Activated CD8-positive, alpha-beta memory T cell treated with anti-CD3 and anti-CD28 coated beads, Interleukin-2, amount 10 ng/mL, durations not matched to agents 7 days and 5 days (primary cell): ENCODE measurements at regions of chr7 and their contacts with region 1.

Region 1: GRCh38 chr7:150898475-150899011 is 46.2 kb downstream of the AOC1 start:
- DNase-seq: peak; percentile 81
- ATAC-seq: peak; percentile 86
- H3K4me3 Mint-ChIP-seq: no peak overlapping the region
- H3K27ac Mint-ChIP-seq: no peak overlapping the region
- H3K4me1 Mint-ChIP-seq: peaks cover 12% of the 10 kb centered on the region
- H3K27me3 Mint-ChIP-seq: peaks cover 74% of the 10 kb centered on the region

Region 2: DNA sequence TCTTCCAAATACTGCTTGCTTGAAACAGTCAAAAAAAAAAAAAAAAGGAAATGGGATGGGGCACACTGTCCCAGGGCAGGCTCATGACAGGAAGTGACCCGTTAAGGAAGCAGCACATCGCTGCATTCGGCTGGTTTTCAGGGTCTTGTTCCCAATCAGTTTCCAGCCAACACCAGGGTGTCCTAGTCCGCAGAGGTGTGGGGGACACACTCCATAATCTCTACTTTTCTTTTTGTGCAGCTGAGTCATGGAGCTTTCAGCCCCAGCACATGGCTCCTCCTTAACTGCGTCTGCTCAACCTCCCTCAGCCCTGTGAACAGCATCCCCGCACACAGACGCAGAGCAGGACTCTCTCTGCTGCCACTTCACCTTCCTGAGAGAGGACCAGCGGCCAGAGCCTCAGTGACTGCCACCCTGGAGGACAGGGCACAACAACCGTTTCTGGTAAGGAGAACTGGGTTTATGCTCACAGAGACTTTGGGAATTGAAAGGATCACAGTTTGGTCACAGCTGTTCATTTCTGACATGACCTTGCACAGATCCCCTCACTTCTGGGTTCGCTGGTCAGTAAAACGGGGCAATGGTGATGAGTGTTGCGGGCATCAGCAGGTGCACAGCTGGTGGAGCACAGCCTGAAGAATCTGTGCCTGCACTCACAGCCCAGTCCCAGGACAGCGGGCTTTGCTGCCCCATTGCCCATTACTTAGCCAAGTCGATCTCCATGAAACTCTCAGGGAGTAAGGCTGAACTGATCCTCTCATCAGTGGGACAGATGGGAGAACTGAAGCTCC is 161.1 kb before region 1 on chr7 and contains the start of gene GIMAP5:
- CTCF ChIA-PET with region 1: no interaction called
- DNase-seq: peak; percentile 79
- ATAC-seq: peak; percentile 65
- H3K4me3 Mint-ChIP-seq: peak within 1 kb of the TSS; percentile 94
- H3K27ac Mint-ChIP-seq: peak within 1 kb of the TSS; percentile 98
- H3K4me1 Mint-ChIP-seq: peaks cover 83% of the 10 kb centered on the region
- H3K27me3 Mint-ChIP-seq: no peaks in the 10 kb centered on the region
- total RNA-seq, gene GIMAP5: 41.0 to 42.5 TPM

Region 3: DNA sequence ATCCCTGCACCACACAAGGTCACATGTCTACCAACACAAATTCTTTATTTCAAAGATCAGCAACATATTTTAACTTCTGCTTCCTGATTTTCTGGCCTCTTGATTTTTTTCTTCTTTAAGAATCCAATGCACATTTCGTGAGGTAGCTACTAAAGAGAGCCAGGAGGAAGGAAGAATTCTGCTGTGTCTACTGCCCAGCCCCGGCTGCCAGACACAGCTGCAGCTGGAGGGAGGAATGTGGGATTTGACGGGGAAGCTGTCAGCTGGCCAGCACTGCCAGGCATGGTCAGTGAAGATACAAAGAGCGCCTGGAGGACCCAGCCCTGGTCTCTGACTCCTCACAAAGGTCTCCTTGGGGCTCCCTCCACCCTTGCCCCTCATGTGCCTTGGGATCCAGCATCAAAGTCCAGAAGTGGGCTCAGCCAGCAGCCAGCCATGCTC is 53.1 kb before region 1 on chr7:
- CTCF ChIA-PET with region 1: no interaction called
- DNase-seq: no peak
- ATAC-seq: no peak
- H3K4me3 Mint-ChIP-seq: no peak overlapping the region
- H3K27ac Mint-ChIP-seq: no peak overlapping the region
- H3K4me1 Mint-ChIP-seq: no peaks in the 10 kb centered on the region
- H3K27me3 Mint-ChIP-seq: peaks cover 27% of the 10 kb centered on the region

Region 4: GRCh38 chr7:150867605-150868004 is 30.9 kb before region 1 on chr7:
- CTCF ChIA-PET with region 1: interaction called, 10 read pairs
- DNase-seq: peak; percentile 61
- ATAC-seq: peak; percentile 92
- H3K4me3 Mint-ChIP-seq: no peak overlapping the region
- H3K27ac Mint-ChIP-seq: no peak overlapping the region
- H3K4me1 Mint-ChIP-seq: peaks cover 9% of the 10 kb centered on the region
- H3K27me3 Mint-ChIP-seq: peaks cover 53% of the 10 kb centered on the region

Region 5: GRCh38 chr7:150909200-150909995 is 10.9 kb after region 1 on chr7:
- CTCF ChIA-PET with region 1: interaction called, 27 read pairs
- DNase-seq: peak; percentile 76
- ATAC-seq: peak; percentile 84
- H3K4me3 Mint-ChIP-seq: no peak overlapping the region
- H3K27ac Mint-ChIP-seq: peak overlapping the region; percentile 50
- H3K4me1 Mint-ChIP-seq: peaks cover 8% of the 10 kb centered on the region
- H3K27me3 Mint-ChIP-seq: peaks cover 61% of the 10 kb centered on the region

Region 6: DNA sequence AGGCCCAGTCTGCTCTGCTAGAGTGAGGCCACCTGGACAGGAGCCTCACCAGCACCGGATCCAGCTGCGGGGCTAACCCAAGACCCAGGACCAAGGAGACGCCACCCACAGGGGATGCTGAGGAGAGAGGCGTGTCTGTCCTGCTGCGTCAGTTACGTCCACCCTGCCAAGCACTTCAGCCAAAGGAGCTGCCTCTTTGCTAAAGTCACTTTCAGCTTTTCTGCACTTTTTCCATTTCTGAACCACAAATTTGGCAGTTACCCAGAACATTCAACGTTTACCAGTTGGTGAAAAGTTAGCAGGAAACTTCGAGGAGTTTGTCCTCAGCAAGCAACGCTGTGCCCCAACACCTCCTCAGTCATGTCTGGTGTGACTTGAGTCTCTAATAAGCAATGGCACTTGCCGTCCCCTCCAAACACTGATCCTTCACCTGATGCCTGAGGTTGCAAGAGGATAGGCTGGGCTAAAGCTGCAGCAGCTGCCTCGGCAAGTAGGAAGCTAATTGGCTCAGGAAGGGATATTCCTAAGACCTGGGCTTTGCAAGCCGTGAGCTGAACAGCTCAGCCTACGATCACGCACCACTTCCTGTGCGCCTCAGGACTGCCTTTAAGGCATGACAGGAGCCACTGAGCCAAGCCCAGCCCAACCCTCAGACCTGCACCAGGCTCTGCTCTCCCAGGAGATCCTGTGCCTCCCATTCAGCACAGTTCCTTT is 39.5 kb after region 1 on chr7:
- CTCF ChIA-PET with region 1: interaction called, 11 read pairs
- DNase-seq: no peak
- ATAC-seq: peak; percentile 58
- H3K4me3 Mint-ChIP-seq: no peak overlapping the region
- H3K27ac Mint-ChIP-seq: no peak overlapping the region
- H3K4me1 Mint-ChIP-seq: peaks cover 28% of the 10 kb centered on the region
- H3K27me3 Mint-ChIP-seq: peaks cover 13% of the 10 kb centered on the region

Region 7: GRCh38 chr7:150988230-150989226 is 90.0 kb after region 1 on chr7:
- CTCF ChIA-PET with region 1: interaction called, 36 read pairs
- DNase-seq: peak; percentile 74
- ATAC-seq: peak; percentile 79
- H3K4me3 Mint-ChIP-seq: peak overlapping the region; percentile 34
- H3K27ac Mint-ChIP-seq: no peak overlapping the region
- H3K4me1 Mint-ChIP-seq: peaks cover 8% of the 10 kb centered on the region
- H3K27me3 Mint-ChIP-seq: peaks cover 39% of the 10 kb centered on the region

Region 8: GRCh38 chr7:151017953-151018420 is 119.4 kb after region 1 on chr7:
- CTCF ChIA-PET with region 1: interaction called, 11 read pairs
- DNase-seq: peak; percentile 84
- ATAC-seq: peak; percentile 64
- H3K4me3 Mint-ChIP-seq: peak overlapping the region; percentile 69
- H3K27ac Mint-ChIP-seq: peak overlapping the region; percentile 52
- H3K4me1 Mint-ChIP-seq: peaks cover 45% of the 10 kb centered on the region
- H3K27me3 Mint-ChIP-seq: peaks cover 39% of the 10 kb centered on the region